ENCODE measurements at regions of chr6 and their contacts with region 1.

Region 1: DNA sequence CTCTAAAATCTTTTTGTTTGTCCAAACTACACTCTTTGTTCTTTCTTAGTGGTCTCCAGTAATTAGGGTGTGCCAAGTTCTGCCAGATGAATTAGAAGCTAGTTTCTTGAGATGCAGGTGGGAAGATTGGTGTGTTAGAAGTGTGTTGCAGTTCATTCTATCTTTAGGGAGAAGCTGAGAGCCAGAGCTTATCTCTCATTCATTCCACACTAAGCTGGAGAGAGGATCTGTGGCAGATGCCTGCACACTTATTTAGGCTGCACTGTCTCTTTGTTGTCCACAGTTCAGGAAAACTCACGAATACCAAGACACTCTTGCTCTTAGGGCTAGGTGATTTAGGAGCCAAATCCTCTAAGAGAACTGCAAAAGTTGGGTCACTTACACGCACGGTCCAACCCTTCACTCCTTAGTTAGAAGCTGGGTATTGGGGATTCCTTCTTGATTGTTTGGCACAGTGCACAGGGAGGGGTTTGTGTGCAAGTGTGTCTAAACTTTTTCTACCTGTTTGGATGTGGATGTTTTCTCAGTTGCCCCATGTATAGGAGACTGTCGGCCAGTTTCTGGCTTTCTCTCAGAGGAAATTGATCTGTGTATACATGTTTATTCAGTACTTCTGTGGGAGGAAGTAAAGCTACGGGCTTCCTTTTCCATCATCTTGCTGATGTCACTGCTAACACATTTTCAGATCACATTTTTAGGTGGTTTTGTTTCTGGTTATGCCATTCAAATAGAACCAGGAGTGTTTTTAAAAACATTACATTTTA is 49.5 kb downstream of the SMAP1 start:
- DNase-seq: no peak
- CTCF ChIP-seq: no peak

Region 2: GRCh38 chr6:70706491-70707123 is 10.6 kb before region 1 on chr6:
- CTCF ChIA-PET with region 1: interaction called, 20 read pairs
- POLR2A ChIA-PET with region 1: no interaction called
- DNase-seq: no peak
- CTCF ChIP-seq: peak; percentile 38

Measured in GM10248 (cell line).